ENCODE measurements at regions of chr5 and their contacts with region 1.

Region 1: GRCh38 chr5:147628058-147628895 is 118.4 kb upstream of the DPYSL3 start:
- DNase-seq: peak; percentile 47 to 48
- H3K4me3 ChIP-seq: no peak overlapping the region
- H3K27ac ChIP-seq: no peak overlapping the region
- H3K4me1 ChIP-seq: no peaks in the 10 kb centered on the region
- H3K27me3 ChIP-seq: no peaks in the 10 kb centered on the region
- CTCF ChIP-seq: peak in 4 of 6 experiments; percentile 53 to 67 (median 66)
- POLR2A ChIP-seq: no peak

Region 2: DNA sequence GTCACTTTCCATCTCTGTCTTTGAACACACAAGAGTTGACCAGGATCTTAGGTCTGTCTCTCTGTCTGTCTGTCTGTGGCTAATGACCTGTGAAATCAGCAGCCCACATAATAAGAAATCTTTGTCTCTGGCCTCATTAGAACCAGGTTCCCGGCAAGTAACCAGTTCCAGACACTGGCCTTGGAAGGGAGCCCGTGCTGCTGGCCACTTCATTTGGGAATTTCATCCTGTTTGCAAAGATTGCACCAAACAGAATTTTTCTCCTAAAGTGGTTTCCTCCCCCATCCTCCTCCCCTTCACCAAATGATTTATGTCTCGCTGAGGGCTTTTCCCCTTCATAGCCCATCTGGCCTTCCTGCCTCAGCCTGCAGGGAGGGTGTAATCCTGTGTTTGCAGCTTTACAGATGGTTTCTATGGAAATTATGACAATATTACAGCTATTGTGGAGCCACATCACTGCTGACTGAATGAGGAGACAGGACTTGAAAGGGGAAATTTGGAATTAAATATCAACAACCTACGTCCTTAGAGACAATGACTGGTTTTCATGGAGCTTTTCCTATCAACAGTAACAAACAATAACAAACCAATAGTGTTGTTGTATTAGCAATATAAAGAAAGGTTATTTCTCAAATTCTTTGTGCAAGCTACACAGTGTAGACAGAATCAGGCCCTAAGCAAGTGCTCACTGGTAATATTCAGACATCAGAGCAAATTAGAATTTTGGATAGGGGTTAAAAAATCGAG is 144.1 kb before region 1 on chr5:
- intact Hi-C with region 1: no loop called
- DNase-seq: peak; percentile 38 to 40
- H3K4me3 ChIP-seq: no peak overlapping the region
- H3K27ac ChIP-seq: peak overlapping the region in 2 of 3 donors; percentile 22 to 64
- H3K4me1 ChIP-seq: peaks cover 18 to 26% of the 10 kb centered on the region in 2 donors
- H3K27me3 ChIP-seq: no peaks in the 10 kb centered on the region
- CTCF ChIP-seq: no peak
- POLR2A ChIP-seq: no peak

Region 3: DNA sequence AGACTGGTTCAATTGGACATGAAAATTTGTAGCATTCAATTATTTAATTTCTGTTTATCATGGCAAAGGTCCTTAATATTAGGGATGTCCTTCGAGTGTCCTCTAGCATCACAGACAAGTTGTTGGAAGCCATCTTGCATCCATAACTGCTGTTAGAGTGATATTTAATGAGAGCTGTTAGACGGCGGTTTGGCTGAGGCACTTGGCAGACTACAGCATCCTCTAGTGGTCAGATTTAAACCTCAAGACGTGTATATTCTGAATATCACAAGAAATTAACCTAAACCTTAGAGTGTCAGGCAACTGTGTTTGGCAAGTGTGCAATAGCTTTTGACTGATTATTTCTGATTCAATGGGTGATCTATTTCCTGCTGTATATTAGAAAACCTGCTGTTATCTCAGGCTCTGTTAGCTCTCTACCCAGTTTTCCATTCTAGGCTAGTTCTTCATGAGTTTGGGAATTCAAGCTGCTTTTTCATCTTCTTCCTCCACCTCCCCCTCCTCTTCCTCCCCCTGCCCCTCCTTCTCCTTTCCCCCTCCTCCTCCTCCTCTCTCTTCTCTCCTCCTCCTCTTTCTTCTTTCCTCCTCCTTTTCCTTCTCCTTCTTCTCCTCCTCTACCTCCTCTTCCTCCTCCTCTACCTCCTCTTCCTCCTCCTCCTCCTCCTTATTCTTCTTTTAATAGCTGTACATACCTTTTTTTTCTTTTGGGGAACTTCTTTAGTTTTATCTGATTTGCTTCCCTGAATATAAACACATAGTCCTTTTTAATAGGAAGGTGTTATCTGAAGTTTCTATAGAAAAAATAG is 194.6 kb after region 1 on chr5:
- intact Hi-C with region 1: loop called (anchors 5 kb)
- DNase-seq: peak; percentile 22 to 32
- H3K4me3 ChIP-seq: no peak overlapping the region
- H3K27ac ChIP-seq: no peak overlapping the region
- H3K4me1 ChIP-seq: no peaks in the 10 kb centered on the region
- H3K27me3 ChIP-seq: no peaks in the 10 kb centered on the region
- CTCF ChIP-seq: peak; percentile 53 to 95 (median 82)
- POLR2A ChIP-seq: no peak

Measured in thyroid gland (tissue), 4 donors.